ENCODE measurements at regions of chr12 and their contacts with region 1.

Region 1: GRCh38 chr12:110468212-110469048 is at the starts of genes FAM216A and GPN3:
- DNase-seq: peak; percentile 86
- H3K4me3 ChIP-seq: peak within 1 kb of the TSS; percentile 86
- CTCF ChIP-seq: no peak

Region 2: GRCh38 chr12:110256780-110257431 is 211.5 kb before region 1 on chr12:
- CTCF ChIA-PET with region 1: no interaction called
- POLR2A ChIA-PET with region 1: no interaction called
- DNase-seq: no peak
- H3K4me3 ChIP-seq: no peak overlapping the region
- CTCF ChIP-seq: no peak

Region 3: DNA sequence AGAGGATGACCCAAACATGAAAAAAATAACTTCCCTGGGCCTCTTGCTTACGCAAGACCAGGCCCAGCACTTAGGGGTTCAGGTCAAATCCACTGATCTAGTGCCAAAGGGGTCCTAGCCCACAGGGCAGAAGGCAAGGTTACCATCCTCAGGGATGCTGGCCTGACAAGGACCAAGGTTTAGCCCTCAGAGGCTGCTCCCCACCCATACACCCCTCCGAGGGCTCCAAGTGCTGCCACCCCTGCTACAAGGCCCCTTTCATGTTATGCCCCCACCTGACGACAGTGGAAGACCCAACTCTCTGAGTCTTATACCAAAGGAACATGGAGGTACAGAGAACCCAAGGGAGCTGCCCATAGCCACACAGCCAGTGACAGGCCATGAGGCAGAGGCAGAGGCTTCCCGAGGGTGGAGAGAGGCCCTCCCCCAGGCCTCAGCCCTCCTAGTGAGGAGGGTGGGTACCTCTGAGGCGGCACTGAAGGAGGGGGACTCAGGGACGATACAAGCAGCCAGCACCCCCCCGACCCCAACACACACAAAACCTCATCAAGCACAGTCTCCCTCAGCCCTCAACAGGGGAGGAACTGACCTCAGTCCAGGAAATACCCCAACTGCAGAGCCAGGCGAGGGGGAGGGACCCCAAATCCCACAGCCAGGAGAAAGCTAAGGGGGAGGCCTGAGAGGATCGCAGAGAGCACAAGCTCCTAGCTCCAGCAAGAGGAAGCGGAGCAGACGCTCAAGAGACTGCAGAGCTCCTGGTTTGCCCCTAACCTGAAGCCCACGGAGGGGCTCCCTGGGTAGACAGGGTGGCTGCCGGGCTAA is 101.9 kb before region 1 on chr12:
- CTCF ChIA-PET with region 1: no interaction called
- POLR2A ChIA-PET with region 1: no interaction called
- DNase-seq: no peak
- H3K4me3 ChIP-seq: no peak overlapping the region
- CTCF ChIP-seq: no peak

Region 4: DNA sequence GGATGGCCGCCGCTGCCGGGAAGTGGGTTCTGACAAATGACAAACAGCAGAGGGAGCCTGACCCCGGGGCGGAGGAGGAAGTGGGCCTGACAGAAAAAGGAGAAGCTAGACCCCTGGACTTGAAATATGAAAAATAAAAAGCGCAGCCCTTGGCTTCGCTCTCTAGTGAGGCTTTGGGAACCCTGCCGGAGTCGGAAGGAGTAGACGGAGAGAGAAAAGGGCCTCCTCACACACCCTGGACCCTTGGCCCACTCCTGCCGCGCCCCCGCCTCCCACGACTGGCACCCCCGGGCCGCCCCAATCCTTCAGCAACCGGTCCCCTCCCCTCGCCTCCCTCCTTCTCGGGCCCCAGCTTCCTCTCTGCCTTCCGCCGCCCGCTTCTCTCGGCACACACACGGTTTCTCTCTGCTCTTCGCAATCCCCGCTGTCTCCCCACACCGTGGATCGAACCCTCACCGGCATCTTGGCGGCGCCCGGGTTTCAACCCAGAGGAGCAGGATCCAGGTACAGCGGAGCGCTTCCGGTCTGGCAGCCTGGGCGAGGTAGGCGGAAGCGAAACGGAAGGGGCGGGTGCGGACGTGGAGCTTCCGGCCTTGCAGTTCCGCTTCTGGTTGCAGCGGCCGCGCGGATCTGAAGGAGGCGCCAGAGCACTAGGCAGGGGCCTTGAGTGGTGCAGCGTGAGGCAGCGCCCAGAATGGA is 18.5 kb before region 1 on chr12 and contains the start of gene ARPC3:
- CTCF ChIA-PET with region 1: interaction called, 92 read pairs
- POLR2A ChIA-PET with region 1: interaction called, 15 read pairs
- DNase-seq: peak; percentile 42
- H3K4me3 ChIP-seq: peak within 1 kb of the TSS; percentile 95
- CTCF ChIP-seq: peak; percentile 92

Region 5: DNA sequence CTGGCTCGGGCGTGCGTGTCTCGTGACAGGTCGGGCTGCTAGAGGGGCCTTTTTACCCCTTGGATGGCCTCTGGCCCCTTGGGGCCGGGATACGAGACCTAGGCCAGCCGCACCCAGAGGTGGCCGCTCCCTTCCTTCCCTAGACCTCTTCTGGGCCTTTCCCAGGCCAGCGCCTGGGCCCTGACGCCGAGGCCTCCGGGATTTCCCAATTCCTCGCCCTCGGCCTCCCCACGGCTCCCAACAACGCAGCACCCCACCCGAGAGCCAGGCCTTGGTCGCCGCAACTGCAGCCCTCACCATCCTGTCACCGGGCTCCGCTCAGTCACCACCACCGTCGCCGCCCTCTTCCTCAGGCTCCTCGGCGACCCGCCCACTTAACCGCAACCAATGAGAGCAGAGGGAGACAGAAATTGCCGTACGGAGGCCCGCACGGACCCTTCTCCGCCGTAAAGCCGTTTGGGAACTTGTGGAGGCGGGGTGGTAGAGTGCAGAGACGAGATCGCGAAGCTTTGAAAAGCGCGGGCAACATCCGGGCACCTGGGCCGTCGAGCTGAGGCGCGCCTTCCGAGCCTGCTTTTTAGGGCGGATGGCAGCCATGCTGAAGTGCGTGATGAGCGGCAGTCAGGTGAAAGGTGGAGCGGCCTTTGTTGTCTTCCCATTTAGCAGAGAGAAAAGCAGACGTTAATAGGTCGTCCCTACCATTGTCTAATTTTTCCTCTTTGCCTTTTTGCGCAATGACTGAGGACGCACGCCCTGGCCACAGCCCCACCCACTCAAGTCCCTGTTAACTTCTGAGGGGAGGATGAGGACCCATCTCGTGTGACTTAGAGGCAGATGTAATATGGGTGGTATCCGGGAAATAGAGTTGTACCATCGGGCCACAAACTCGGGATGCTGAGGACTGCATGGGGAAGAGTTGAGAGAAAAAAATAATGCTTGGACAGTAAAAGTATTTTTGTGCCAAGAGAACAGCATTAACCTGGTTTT is 33.6 kb after region 1 on chr12 and contains the starts of genes RAD9B and VPS29:
- CTCF ChIA-PET with region 1: interaction called, 16 read pairs
- POLR2A ChIA-PET with region 1: interaction called, 4 read pairs
- DNase-seq: peak; percentile 89
- H3K4me3 ChIP-seq: peak within 1 kb of the TSS; percentile 96
- CTCF ChIP-seq: no peak

Region 6: GRCh38 chr12:110513842-110514241 is 45.4 kb after region 1 on chr12:
- CTCF ChIA-PET with region 1: interaction called, 10 read pairs
- POLR2A ChIA-PET with region 1: no interaction called
- DNase-seq: no peak
- H3K4me3 ChIP-seq: no peak overlapping the region
- CTCF ChIP-seq: no peak